GM12878 (cell line): ENCODE measurements at regions of chr20 and their contacts with region 1.

Region 1: GRCh38 chr20:46363800-46364634 is 42.4 kb downstream of the ELMO2 start:
- DNase-seq: peak; percentile 39
- ATAC-seq: peak; percentile 90
- H3K4me3 ChIP-seq: peak overlapping the region; percentile 67
- H3K27ac ChIP-seq: peak overlapping the region; percentile 96
- H3K4me1 ChIP-seq: peaks cover 27% of the 10 kb centered on the region
- H3K27me3 ChIP-seq: no peaks in the 10 kb centered on the region
- CTCF ChIP-seq: no peak
- EP300 ChIP-seq: no peak
- POLR2A ChIP-seq: peak; percentile 95
- RAD21 ChIP-seq: no peak

Region 2: DNA sequence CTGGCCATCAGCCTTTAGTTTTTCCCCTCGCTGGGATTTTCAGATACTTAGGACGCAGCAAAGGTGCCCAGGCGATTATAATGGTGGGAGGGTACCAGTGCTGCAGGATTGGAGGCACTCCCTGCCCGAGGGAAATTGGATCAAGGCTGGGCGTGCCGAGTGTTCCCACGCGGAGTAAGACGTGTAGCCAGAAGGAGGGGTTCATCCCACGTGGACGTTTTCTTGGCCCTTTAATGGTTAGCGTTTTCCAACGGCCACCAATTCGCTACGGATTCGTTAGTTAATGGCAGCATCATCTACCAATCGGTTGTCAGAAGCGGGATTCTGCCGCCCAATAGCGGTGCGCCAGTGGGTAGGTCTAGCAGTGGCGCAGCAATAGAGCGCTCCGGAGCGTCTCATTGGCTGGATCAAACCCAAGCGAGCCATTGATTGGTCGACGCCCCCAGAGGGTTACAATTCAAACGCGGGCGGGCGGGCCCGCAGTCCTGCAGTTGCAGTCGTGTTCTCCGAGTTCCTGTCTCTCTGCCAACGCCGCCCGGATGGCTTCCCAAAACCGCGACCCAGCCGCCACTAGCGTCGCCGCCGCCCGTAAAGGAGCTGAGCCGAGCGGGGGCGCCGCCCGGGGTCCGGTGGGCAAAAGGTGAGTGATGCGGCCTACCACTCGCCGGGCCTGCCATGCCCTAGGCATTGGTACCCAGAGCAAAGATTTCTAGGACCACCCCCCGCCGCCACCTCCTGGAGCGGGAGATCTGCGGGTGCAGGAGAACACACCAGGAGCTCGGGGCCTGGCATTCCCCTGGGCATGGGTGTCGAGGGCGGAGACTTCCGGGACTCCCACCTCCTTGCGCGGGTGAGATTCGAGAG is 551.6 kb before region 1 on chr20 and contains the start of gene UBE2C:
- CTCF ChIA-PET with region 1: no interaction called
- POLR2A ChIA-PET with region 1: no interaction called
- RAD21 ChIA-PET with region 1: no interaction called
- SMC1A ChIA-PET with region 1: no interaction called
- in situ Hi-C with region 1: loop called (anchors 25 kb)
- intact Hi-C with region 1: no loop called
- DNase-seq: peak; percentile 98
- ATAC-seq: peak; percentile 100
- H3K4me3 ChIP-seq: peak within 1 kb of the TSS; percentile 85
- H3K27ac ChIP-seq: peak within 1 kb of the TSS; percentile 93
- H3K4me1 ChIP-seq: no peaks in the 10 kb centered on the region
- H3K27me3 ChIP-seq: no peaks in the 10 kb centered on the region
- CTCF ChIP-seq: no peak
- EP300 ChIP-seq: no peak
- POLR2A ChIP-seq: peak; percentile 88
- RAD21 ChIP-seq: no peak
- polyA plus RNA-seq, gene UBE2C: 86.2 to 140 TPM

Region 3: GRCh38 chr20:46400828-46401477 is 36.9 kb after region 1 on chr20:
- CTCF ChIA-PET with region 1: interaction called, 6 read pairs
- POLR2A ChIA-PET with region 1: interaction called, 17 read pairs
- RAD21 ChIA-PET with region 1: interaction called, 26 read pairs
- SMC1A ChIA-PET with region 1: interaction called, 20 read pairs
- in situ Hi-C with region 1: loop called (anchors 5 kb)
- intact Hi-C with region 1: loop called (anchors 1 kb)
- DNase-seq: no peak
- ATAC-seq: peak; percentile 14
- H3K4me3 ChIP-seq: peak overlapping the region; percentile 26; the same call in 1 of the 2 replicates
- H3K27ac ChIP-seq: peak overlapping the region; percentile 22
- H3K4me1 ChIP-seq: peaks cover 50% of the 10 kb centered on the region
- H3K27me3 ChIP-seq: no peaks in the 10 kb centered on the region
- CTCF ChIP-seq: no peak
- EP300 ChIP-seq: no peak
- POLR2A ChIP-seq: no peak
- RAD21 ChIP-seq: no peak

Region 4: DNA sequence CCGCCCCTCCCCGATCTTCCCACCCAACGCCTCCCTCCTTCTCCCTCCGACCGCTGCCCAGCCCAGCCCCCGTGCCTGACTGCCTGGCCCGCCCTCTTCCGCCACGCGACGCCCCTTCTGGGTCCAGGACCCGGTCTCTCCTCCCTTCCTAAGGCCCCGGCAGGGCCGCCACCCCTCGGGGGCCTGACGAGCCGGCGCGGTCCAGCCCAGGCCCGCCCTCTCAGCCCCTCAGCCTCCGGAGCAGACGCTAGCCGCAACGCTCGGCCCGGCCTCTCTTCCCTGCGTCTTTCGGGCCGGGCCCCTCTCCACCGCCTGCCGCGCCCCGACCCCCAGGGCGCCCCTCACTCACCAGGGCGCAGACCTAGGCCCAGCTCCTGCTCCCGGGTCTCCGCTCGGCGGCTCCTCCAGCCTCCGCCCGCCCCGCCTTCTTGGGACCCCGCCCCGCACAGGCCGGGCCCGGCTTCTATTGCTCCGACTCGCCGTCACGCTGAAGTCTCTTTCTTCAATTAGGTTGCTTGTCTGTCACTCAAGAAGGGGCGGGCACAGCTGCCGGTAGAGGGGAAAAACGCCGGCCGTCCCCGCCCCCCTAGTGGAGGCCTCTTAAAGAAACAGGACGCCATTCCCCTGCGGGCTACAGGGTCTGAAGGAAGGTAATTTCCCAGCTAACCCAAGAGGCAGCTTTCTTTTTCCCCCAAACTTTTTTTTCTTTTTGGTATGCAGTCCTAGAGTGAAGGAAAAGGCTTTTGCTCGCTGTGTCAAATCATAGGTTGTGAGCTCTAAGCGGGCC is 42.4 kb after region 1 on chr20 and contains the start of gene ELMO2:
- CTCF ChIA-PET with region 1: interaction called, 6 read pairs
- POLR2A ChIA-PET with region 1: interaction called, 17 read pairs
- RAD21 ChIA-PET with region 1: interaction called, 26 read pairs
- SMC1A ChIA-PET with region 1: interaction called, 20 read pairs
- in situ Hi-C with region 1: loop called (anchors 5 kb)
- intact Hi-C with region 1: loop called (anchors 1 kb)
- DNase-seq: peak; percentile 76
- ATAC-seq: peak; percentile 91
- H3K4me3 ChIP-seq: peak within 1 kb of the TSS; percentile 82
- H3K27ac ChIP-seq: peak within 1 kb of the TSS; percentile 68
- H3K4me1 ChIP-seq: peaks cover 43% of the 10 kb centered on the region
- H3K27me3 ChIP-seq: no peaks in the 10 kb centered on the region
- CTCF ChIP-seq: no peak
- EP300 ChIP-seq: no peak
- POLR2A ChIP-seq: peak; percentile 65; the same call in 1 of the 2 replicates
- RAD21 ChIP-seq: no peak
- polyA plus RNA-seq, gene ELMO2: 14.2 to 14.8 TPM